PC-9 (cell line): ENCODE measurements at regions of chr12 and their contacts with region 1.

Region 1: GRCh38 chr12:109885616-109886015 is 5.3 kb upstream of the GLTP start:
- DNase-seq: peak; percentile 38 to 87
- H3K4me3 ChIP-seq: no peak overlapping the region
- H3K27ac ChIP-seq: peak overlapping the region; percentile 56
- H3K4me1 ChIP-seq: peaks cover 82% of the 10 kb centered on the region
- H3K27me3 ChIP-seq: no peaks in the 10 kb centered on the region
- CTCF ChIP-seq: no peak

Region 2: GRCh38 chr12:109693653-109694600 is 191.7 kb before region 1 on chr12:
- CTCF ChIA-PET with region 1: interaction called, 19 read pairs
- POLR2A ChIA-PET with region 1: no interaction called
- intact Hi-C with region 1: no loop called
- DNase-seq: no peak
- H3K4me3 ChIP-seq: no peak overlapping the region
- H3K27ac ChIP-seq: no peak overlapping the region
- H3K4me1 ChIP-seq: no peaks in the 10 kb centered on the region; the same call in 1 of the 2 replicates
- H3K27me3 ChIP-seq: 0 out of 2 replicates have a peak, but pooled peaks cover 17% of the 10 kb centered on the region
- CTCF ChIP-seq: no peak

Region 3: DNA sequence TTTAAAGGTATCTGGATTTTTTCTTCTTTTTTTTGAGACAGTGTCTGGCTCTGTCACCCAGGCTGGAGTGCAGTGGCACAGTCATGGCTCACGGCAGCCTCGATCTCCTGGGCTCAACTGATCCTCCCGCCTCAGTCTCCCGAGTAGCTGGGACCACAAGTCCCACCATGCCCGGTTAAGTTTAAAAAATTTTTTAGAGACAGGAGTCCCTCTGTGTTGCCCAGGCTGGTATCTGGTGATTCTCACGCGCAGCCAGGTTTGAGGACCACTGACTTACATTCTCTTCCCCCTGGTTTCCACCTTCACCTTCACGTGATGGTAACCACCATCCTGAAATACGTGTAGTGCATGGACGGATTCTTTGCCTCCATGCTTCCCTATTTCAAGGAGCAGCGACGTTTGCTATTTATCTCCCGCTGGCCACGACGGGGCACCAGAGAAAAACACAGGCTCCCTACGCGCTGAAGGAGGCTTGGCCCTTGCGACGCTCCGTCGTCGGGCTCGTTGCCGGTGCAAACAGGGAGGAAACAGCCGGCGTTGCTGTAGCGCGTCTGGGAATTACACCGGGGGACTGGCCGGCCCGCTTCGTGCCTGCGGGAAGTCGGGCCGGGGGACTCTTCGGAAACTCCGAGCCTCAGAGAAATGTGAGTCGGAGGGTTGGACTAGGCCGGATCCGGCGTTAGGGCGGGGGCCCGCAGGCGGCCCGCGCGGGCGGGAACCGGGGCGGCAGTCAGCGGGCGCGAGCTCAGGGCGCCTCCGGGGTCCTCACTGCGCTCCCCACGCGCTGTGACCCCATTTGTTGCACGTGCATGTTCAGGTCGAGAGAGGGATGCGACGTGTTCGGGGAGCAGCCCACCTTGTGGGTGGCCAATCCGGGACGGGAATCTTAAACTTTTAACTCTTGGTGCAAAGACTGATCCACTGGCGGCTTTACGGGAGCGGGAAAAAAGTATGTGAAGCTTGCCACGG is 14.5 kb after region 1 on chr12 and contains the start of gene TCHP:
- CTCF ChIA-PET with region 1: interaction called, 8 read pairs
- POLR2A ChIA-PET with region 1: interaction called, 14 read pairs
- intact Hi-C with region 1: no loop called
- DNase-seq: peak; percentile 71 to 76
- H3K4me3 ChIP-seq: peak within 1 kb of the TSS; percentile 73
- H3K27ac ChIP-seq: peak within 1 kb of the TSS; percentile 30; the same call in 1 of the 2 replicates
- H3K4me1 ChIP-seq: peaks cover 16% of the 10 kb centered on the region
- H3K27me3 ChIP-seq: no peaks in the 10 kb centered on the region
- CTCF ChIP-seq: peak; percentile 33; the same call in 1 of the 2 replicates
- total RNA-seq, gene TCHP: 17.6 and 19.2 TPM in 2 replicates

Region 4: GRCh38 chr12:110613771-110614684 is 728.4 kb after region 1 on chr12 and contains the start of gene TCTN1:
- CTCF ChIA-PET with region 1: interaction called, 3 read pairs
- POLR2A ChIA-PET with region 1: interaction called, 27 read pairs
- intact Hi-C with region 1: no loop called
- DNase-seq: peak; percentile 88 to 96
- H3K4me3 ChIP-seq: peak within 1 kb of the TSS; percentile 80
- H3K27ac ChIP-seq: no peak within 1 kb of the TSS
- H3K4me1 ChIP-seq: peaks cover 18% of the 10 kb centered on the region
- H3K27me3 ChIP-seq: no peaks in the 10 kb centered on the region
- CTCF ChIP-seq: no peak; the same call in 1 of the 2 replicates
- total RNA-seq, gene TCTN1: 58.3 and 66.8 TPM in 2 replicates